GM18951 (cell line): ENCODE measurements at regions of chr14 and their contacts with region 1.

Region 1: GRCh38 chr14:62126879-62127478 is 364.8 kb downstream of the SNAPC1 start:
- POLR2A ChIP-seq: no peak

Region 2: GRCh38 chr14:61911574-61911973 is 215.4 kb before region 1 on chr14:
- in situ Hi-C with region 1: loop called (anchors 10 kb)
- POLR2A ChIP-seq: no peak